Motor neuron (in vitro differentiated cells): ENCODE measurements at regions of chr12 and their contacts with region 1.

Region 1: GRCh38 chr12:106247674-106248311 is at the start of gene CKAP4:
- ATAC-seq: peak; percentile 20 to 87 (median 82)
- H3K4me3 ChIP-seq: peak within 1 kb of the TSS; percentile 56 to 98 (median 80)
- H3K27ac ChIP-seq: peak within 1 kb of the TSS; percentile 95 to 96
- H3K4me1 ChIP-seq: peaks cover 24 to 25% of the 10 kb centered on the region in 2 donors
- total RNA-seq, gene CKAP4: 38.0 to 132 (median 50.4) TPM

Region 2: GRCh38 chr12:106345739-106346138 is 97.9 kb after region 1 on chr12:
- in situ Hi-C with region 1: loop called in 1 of 9 experiments (anchors 25 kb)
- ATAC-seq: peak in 6 of 8 experiments; percentile 9 to 81 (median 54)
- H3K4me3 ChIP-seq: no peak overlapping the region
- H3K27ac ChIP-seq: no peak overlapping the region
- H3K4me1 ChIP-seq: peaks cover 0 to 8% of the 10 kb centered on the region in 2 donors